SK-N-SH (cell line): ENCODE measurements at regions of chr12 and their contacts with region 1.

Region 1: DNA sequence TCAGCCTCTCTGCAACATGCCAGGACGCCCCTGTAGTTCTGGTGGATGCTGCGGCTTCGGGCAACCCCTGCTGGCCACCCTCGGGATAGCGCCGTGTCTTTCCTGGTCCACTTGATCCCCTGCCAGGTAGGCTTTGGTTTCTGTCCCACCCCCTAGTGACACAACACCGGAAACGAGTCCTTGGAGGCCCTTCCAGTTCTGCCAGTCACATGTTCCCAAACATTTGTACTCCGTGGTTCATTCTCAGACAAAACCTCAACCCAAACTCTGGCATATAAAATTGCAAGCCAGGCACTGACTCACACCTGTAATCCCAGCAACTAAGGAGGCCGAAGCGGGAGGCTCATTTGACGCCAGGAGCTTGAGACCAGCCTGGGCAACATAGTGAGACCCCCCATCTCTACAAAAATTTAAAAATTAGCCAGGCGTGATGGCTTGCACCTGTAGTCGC is 37.1 kb downstream of the RASAL1 start:
- DNase-seq: peak; percentile 92
- H3K4me3 ChIP-seq: peak overlapping the region in 1 of 2 experiments; percentile 5; a peak in 1 of 4 replicates
- H3K27ac ChIP-seq: peak overlapping the region in 1 of 2 experiments; percentile 71; a peak in 1 of 4 replicates
- H3K4me1 ChIP-seq: peaks cover 0 to 14% of the 10 kb centered on the region in 2 experiments; a peak in 1 of 4 replicates
- H3K27me3 ChIP-seq: no peaks in the 10 kb centered on the region
- CTCF ChIP-seq: peak; percentile 77
- EP300 ChIP-seq: no peak
- RAD21 ChIP-seq: peak; percentile 80

Region 2: DNA sequence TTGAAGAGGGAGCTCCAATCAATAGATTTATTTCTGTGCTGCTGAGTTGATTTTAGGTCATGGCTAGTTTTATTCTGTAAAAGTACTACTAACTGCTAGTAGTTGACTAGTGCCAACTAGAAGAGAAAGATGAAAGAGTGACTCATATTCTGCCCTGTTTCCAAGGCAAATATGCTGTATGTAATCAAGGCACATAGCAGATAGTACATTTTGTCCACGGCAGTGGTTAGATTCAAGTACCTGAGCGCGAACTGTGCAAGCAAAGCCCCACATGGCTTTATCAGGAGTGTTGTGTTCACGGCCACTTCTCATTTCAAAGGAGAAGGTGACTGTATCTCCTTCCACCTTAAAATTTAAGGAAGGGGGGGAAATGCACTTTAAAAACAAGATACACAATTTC is 846.3 kb before region 1 on chr12:
- CTCF ChIA-PET with region 1: no interaction called
- POLR2A ChIA-PET with region 1: no interaction called
- DNase-seq: no peak
- H3K4me3 ChIP-seq: no peak overlapping the region
- H3K27ac ChIP-seq: no peak overlapping the region
- H3K4me1 ChIP-seq: no peaks in the 10 kb centered on the region
- H3K27me3 ChIP-seq: no peaks in the 10 kb centered on the region
- CTCF ChIP-seq: no peak
- EP300 ChIP-seq: no peak
- RAD21 ChIP-seq: no peak

Region 3: GRCh38 chr12:113065126-113066007 is 33.1 kb before region 1 on chr12:
- CTCF ChIA-PET with region 1: interaction called, 14 read pairs
- POLR2A ChIA-PET with region 1: no interaction called
- DNase-seq: peak; percentile 63
- H3K4me3 ChIP-seq: no peak overlapping the region
- H3K27ac ChIP-seq: no peak overlapping the region
- H3K4me1 ChIP-seq: peaks cover 0 to 18% of the 10 kb centered on the region in 2 experiments; a peak in 1 of 4 replicates
- H3K27me3 ChIP-seq: no peaks in the 10 kb centered on the region
- CTCF ChIP-seq: no peak
- EP300 ChIP-seq: no peak
- RAD21 ChIP-seq: no peak

Region 4: DNA sequence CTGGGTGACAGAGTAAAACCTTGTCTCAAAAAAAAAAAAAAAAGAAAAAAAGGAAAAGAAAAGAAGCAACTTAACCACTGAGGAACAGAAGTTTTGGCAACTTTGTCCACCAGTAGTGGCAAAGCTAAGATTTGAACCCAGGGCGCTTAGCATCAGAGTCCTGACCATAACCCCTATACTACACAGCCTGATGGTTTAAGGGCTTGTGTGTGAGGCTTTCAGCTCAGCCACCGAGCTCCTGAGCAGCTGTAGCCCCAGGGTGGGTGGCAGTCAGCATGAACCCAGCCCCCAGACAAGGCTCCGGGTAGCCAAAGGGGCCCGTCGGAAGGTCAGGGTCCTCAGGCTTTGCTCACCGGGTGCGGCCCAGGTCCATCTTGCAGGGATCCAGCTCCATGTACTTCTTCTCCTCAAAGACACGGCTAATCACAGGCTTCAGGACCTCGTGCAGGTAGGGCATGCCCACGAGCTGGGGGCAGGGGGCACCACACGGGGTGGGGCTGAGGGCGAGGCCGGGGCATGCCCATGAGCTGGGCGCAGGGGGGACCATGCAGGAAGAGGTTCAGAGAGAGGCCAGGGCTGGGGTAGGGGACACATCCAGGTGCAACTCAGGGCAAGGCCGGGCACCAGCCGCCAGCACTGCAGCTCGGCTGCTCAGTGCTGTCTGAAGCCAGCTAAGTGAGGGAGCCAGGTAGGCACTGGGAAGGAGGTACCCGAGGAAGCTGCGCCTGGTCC is 16.1 kb after region 1 on chr12:
- CTCF ChIA-PET with region 1: interaction called, 12 read pairs
- POLR2A ChIA-PET with region 1: no interaction called
- DNase-seq: no peak
- H3K4me3 ChIP-seq: no peak overlapping the region
- H3K27ac ChIP-seq: no peak overlapping the region
- H3K4me1 ChIP-seq: no peaks in the 10 kb centered on the region
- H3K27me3 ChIP-seq: no peaks in the 10 kb centered on the region
- CTCF ChIP-seq: no peak
- EP300 ChIP-seq: no peak
- RAD21 ChIP-seq: no peak

Region 5: GRCh38 chr12:113135178-113136127 is 37.0 kb after region 1 on chr12 and contains the start of gene RASAL1:
- CTCF ChIA-PET with region 1: interaction called, 19 read pairs
- POLR2A ChIA-PET with region 1: no interaction called
- DNase-seq: peak; percentile 81
- H3K4me3 ChIP-seq: no peak within 1 kb of the TSS; a peak in 1 of 4 replicates
- H3K27ac ChIP-seq: no peak within 1 kb of the TSS
- H3K4me1 ChIP-seq: no peaks in the 10 kb centered on the region; a peak in 1 of 4 replicates
- H3K27me3 ChIP-seq: no peaks in the 10 kb centered on the region
- CTCF ChIP-seq: peak; percentile 27; the same call in 1 of the 2 replicates
- EP300 ChIP-seq: no peak
- RAD21 ChIP-seq: no peak
- polyA plus RNA-seq, gene RASAL1: not detected in 2 replicates

Region 6: GRCh38 chr12:113244047-113244460 is 145.6 kb after region 1 on chr12:
- CTCF ChIA-PET with region 1: no interaction called
- POLR2A ChIA-PET with region 1: no interaction called
- DNase-seq: peak; percentile 56
- H3K4me3 ChIP-seq: no peak overlapping the region
- H3K27ac ChIP-seq: peak overlapping the region in 1 of 2 experiments; percentile 68; a peak in 2 of 4 replicates
- H3K4me1 ChIP-seq: peaks cover 37 to 64% of the 10 kb centered on the region in 2 experiments
- H3K27me3 ChIP-seq: no peaks in the 10 kb centered on the region
- CTCF ChIP-seq: no peak
- EP300 ChIP-seq: no peak; a peak in 1 of 4 replicates
- RAD21 ChIP-seq: no peak